Aorta (tissue), 5 donors: ENCODE measurements at regions of chr15 and their contacts with region 1.

Region 1: DNA sequence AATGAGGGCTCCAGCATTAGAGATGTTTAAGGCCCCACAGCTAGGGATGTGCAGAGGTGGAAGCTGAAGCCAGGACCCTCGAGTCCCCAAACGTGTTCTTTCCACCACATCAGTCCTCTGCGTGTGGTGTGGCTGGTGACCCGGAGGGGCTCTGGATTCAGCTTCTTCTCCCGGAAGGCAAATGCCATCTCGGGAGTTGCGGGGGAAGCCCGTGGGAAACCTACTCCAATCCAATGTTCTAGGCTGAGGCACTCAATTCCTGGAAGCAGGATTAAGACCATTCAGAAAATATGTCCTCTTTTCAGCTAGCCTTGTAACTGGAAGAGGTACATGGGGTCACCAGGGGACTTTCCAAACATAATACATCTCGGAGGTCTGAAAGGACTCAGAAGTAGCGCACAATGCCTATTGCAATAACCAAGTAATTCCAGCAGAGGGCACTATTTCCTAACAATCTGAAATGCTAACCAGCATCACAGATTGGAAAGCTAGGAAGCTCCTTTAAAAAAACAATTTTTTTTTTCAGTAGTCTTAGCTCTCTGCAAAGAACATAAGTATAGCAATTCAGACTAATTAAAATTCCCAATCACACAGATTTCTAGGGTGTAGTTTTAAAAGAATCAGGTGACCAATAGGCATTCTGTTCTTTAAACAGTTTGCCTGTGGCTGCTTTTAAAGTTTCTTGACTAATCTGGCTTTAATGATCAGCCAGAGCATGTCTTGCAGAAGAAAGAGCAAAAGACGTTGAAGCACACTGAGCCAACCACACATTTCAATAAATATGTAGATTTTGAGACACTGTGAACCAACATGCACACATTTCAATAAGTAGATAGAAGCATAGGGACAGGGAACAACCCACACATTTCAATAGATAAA is 36.1 kb downstream of the BNC1 start:
- DNase-seq: no peak
- ATAC-seq: peak; percentile 74
- H3K4me3 ChIP-seq: no peak overlapping the region
- H3K27ac ChIP-seq: no peak overlapping the region
- H3K4me1 ChIP-seq: no peaks in the 10 kb centered on the region
- H3K27me3 ChIP-seq: no peaks in the 10 kb centered on the region

Region 2: GRCh38 chr15:83413054-83413719 is 164.8 kb after region 1 on chr15:
- intact Hi-C with region 1: loop called in 1 of 2 experiments (anchors 10 kb)
- DNase-seq: no peak
- ATAC-seq: no peak
- H3K4me3 ChIP-seq: no peak overlapping the region
- H3K27ac ChIP-seq: no peak overlapping the region
- H3K4me1 ChIP-seq: no peaks in the 10 kb centered on the region
- H3K27me3 ChIP-seq: no peaks in the 10 kb centered on the region

Region 3: GRCh38 chr15:83477172-83477807 is 228.9 kb after region 1 on chr15:
- intact Hi-C with region 1: no loop called
- DNase-seq: no peak
- ATAC-seq: no peak
- H3K4me3 ChIP-seq: no peak overlapping the region
- H3K27ac ChIP-seq: no peak overlapping the region
- H3K4me1 ChIP-seq: peaks cover 0 to 4% of the 10 kb centered on the region in 2 donors
- H3K27me3 ChIP-seq: no peaks in the 10 kb centered on the region

Region 4: DNA sequence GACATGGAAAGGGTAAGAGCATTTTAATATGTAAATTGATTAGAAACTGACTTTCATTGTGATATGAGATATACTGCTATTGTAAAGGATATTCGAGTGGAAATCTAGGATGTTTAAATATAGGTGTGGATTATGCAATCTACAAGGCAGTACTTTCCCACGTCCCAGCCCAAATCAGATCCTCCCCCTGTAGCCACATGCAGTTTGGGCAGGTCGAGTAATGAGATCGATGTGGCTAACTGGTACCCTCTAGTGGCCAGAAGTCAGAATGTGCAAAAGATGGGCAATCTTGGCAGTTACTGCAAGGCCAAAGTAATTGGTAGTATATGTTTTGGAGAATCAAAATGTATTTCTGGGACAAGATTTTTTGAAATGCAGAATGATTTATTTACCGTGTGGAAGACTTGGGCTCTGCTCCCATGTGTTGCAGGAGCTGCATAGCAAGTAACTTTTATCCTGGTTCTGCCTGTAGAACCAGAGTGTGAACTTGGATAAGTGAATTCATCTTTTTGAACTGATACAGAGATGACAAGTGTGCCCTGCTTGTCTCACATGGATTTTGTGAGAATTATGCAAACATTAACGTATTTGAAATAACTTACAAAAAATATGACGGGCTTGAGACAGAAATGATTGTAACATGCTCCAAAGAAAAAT is 311.0 kb after region 1 on chr15:
- intact Hi-C with region 1: loop called (anchors 5 to 10 kb)
- DNase-seq: no peak
- ATAC-seq: peak; percentile 76
- H3K4me3 ChIP-seq: no peak overlapping the region
- H3K27ac ChIP-seq: no peak overlapping the region
- H3K4me1 ChIP-seq: no peaks in the 10 kb centered on the region
- H3K27me3 ChIP-seq: peaks cover 0 to 2% of the 10 kb centered on the region in 2 donors